Activated naive CD4-positive, alpha-beta T cell treated with anti-CD3 and anti-CD28 coated beads for 36 hours (primary cell): ENCODE measurements at regions of chr3 and their contacts with region 1.

Region 1: GRCh38 chr3:136861890-136862616 is at the start of gene NCK1:
- DNase-seq: peak; percentile 99
- H3K4me3 Mint-ChIP-seq: peak within 1 kb of the TSS; percentile 94
- H3K27ac Mint-ChIP-seq: peak within 1 kb of the TSS; percentile 95
- H3K4me1 Mint-ChIP-seq: peaks cover 41% of the 10 kb centered on the region
- H3K27me3 Mint-ChIP-seq: no peaks in the 10 kb centered on the region
- total RNA-seq, gene NCK1: 24.1 to 29.2 TPM

Region 2: GRCh38 chr3:136250226-136250902 is 611.7 kb before region 1 on chr3 and contains the start of gene PCCB:
- CTCF ChIA-PET with region 1: no interaction called
- intact Hi-C with region 1: loop called (anchors 1 kb)
- DNase-seq: peak; percentile 95
- H3K4me3 Mint-ChIP-seq: peak within 1 kb of the TSS; percentile 83
- H3K27ac Mint-ChIP-seq: peak within 1 kb of the TSS; percentile 90
- H3K4me1 Mint-ChIP-seq: peaks cover 18% of the 10 kb centered on the region
- H3K27me3 Mint-ChIP-seq: no peaks in the 10 kb centered on the region
- total RNA-seq, gene PCCB: 86.0 to 87.6 TPM

Region 3: DNA sequence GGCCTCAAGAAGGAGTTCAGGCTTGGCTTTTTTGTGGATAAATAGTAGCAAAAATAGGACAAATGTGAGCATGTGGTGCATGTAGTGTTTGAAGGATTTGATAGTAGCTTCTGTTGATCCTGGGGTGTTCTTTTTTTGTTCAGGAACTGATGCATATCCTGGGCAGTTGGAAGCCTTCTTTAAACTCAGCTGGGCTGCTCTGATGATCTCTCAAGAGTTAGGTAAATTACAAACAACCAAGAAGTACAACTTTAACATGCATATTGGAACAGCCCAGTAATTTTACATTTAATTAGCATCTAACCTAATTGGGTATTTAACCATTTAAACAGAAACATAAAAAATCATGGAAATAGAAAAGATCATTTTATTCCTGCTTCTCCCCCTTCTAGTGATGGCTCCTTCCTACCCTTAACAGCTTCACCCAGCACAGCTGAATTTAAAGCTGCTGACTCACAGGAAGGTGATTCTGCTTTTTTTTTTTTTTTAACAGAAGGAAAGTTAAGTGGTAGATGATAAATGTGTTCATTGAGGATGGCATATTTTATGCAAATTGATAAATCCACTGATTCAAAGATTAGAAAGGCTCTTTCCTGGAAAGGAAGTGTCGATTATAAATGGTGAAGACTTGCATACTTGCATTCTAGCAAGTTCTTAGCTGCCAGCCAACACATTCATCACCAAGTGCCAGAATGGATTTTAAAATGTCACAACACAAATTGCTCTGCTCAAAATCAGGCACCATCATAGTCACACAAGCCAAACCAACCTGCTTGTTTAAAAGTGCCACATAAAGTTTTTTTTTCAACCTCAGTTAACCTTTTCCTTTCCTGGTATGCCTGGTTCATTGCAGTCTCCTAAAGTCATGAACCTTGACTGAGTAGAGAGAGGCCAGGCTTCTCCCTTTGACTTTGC is 23.2 kb before region 1 on chr3:
- CTCF ChIA-PET with region 1: no interaction called
- intact Hi-C with region 1: loop called (anchors 1 kb)
- DNase-seq: no peak
- H3K4me3 Mint-ChIP-seq: no peak overlapping the region
- H3K27ac Mint-ChIP-seq: no peak overlapping the region
- H3K4me1 Mint-ChIP-seq: peaks cover 15% of the 10 kb centered on the region
- H3K27me3 Mint-ChIP-seq: no peaks in the 10 kb centered on the region

Region 4: GRCh38 chr3:136919799-136920580 is 57.9 kb after region 1 on chr3:
- CTCF ChIA-PET with region 1: no interaction called
- intact Hi-C with region 1: loop called (anchors 5 kb)
- DNase-seq: peak; percentile 21
- H3K4me3 Mint-ChIP-seq: no peak overlapping the region
- H3K27ac Mint-ChIP-seq: no peak overlapping the region
- H3K4me1 Mint-ChIP-seq: peaks cover 76% of the 10 kb centered on the region
- H3K27me3 Mint-ChIP-seq: no peaks in the 10 kb centered on the region

Region 5: GRCh38 chr3:137013955-137014688 is 152.1 kb after region 1 on chr3:
- CTCF ChIA-PET with region 1: interaction called, 13 read pairs
- intact Hi-C with region 1: loop called (anchors 1 kb)
- DNase-seq: peak; percentile 89
- H3K4me3 Mint-ChIP-seq: peak overlapping the region; percentile 70
- H3K27ac Mint-ChIP-seq: no peak overlapping the region
- H3K4me1 Mint-ChIP-seq: peaks cover 6% of the 10 kb centered on the region
- H3K27me3 Mint-ChIP-seq: no peaks in the 10 kb centered on the region

Region 6: GRCh38 chr3:137121704-137122314 is 259.8 kb after region 1 on chr3:
- CTCF ChIA-PET with region 1: no interaction called
- intact Hi-C with region 1: no loop called
- DNase-seq: peak; percentile 48
- H3K4me3 Mint-ChIP-seq: no peak overlapping the region
- H3K27ac Mint-ChIP-seq: no peak overlapping the region
- H3K4me1 Mint-ChIP-seq: no peaks in the 10 kb centered on the region
- H3K27me3 Mint-ChIP-seq: no peaks in the 10 kb centered on the region